ENCODE measurements at regions of chr11 and their contacts with region 1.

Region 1: GRCh38 chr11:117205211-117205818 is 6.1 kb downstream of the TAGLN start:
- DNase-seq: no peak

Region 2: DNA sequence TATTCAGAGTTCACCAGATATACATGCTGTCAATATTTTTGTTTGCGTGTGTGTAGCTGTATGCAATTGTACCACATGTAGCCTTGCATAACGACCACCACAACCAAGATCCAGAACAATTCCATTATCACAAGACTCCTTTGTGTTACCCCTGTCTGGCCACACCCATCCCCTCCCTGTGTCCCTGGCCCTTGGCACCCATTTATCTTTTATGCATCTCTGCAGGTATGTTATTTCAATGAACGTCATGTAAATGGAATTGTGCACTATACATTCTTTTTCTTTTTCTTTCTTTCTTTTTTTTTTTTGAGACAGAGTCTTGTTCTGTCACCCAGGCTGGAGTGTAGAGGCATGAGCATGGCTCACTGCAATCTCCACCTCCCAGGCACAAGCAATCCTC is 70.9 kb before region 1 on chr11:
- intact Hi-C with region 1: loop called in 1 of 2 experiments (anchors 5 kb)
- DNase-seq: no peak

Measured in posterior vena cava (tissue), 2 donors.